GM12878 (cell line): ENCODE measurements at regions of chr11 and their contacts with region 1.

Region 1: GRCh38 chr11:108586600-108586999 is 7.0 kb downstream of the EXPH5 start:
- DNase-seq: no peak
- ATAC-seq: no peak
- H3K4me3 ChIP-seq: no peak overlapping the region
- H3K27ac ChIP-seq: no peak overlapping the region
- H3K4me1 ChIP-seq: peaks cover 11% of the 10 kb centered on the region
- H3K27me3 ChIP-seq: no peaks in the 10 kb centered on the region
- CTCF ChIP-seq: no peak
- EP300 ChIP-seq: no peak
- POLR2A ChIP-seq: no peak
- RAD21 ChIP-seq: no peak

Region 2: DNA sequence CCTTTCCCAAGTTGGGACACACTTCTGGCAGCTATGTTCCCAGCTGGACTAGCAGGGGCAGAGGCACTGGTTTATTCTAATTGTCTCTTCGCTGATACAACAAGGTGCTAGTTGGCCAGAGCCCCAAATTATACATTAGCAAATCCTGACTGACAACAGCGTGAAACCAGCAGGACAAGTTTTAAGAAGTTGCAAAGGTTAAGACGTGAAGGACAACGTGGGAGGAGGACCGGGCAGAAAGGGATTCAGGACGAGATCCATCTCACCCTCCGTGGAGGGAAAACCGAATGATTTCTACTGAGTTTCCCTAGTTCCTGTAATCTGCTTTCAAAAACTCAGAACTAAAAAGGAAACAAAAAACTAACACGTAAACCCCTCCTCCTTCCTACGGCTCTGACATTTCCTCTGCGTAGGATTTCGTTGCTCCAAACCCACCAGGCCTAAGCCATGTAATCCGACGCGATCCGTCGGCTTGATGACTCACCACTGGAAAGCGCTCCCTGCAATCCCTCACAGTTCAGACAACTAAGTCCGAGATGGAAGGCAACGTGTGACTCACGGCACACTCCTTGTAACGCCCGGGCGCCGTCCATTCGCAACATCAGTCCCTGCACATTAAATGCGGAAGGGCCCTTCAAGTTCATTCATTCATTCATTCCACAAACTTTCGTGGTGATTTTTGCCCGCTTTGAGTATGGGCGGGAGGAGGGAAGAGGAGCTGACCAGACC is 89.1 kb before region 1 on chr11:
- CTCF ChIA-PET with region 1: no interaction called
- POLR2A ChIA-PET with region 1: no interaction called
- RAD21 ChIA-PET with region 1: interaction called, 4 read pairs
- SMC1A ChIA-PET with region 1: interaction called, 10 read pairs
- in situ Hi-C with region 1: no loop called
- intact Hi-C with region 1: no loop called
- DNase-seq: peak; percentile 60
- ATAC-seq: peak; percentile 68
- H3K4me3 ChIP-seq: peak overlapping the region; percentile 65
- H3K27ac ChIP-seq: peak overlapping the region; percentile 66
- H3K4me1 ChIP-seq: no peaks in the 10 kb centered on the region
- H3K27me3 ChIP-seq: no peaks in the 10 kb centered on the region
- CTCF ChIP-seq: no peak
- EP300 ChIP-seq: 0 out of 4 replicates have a peak, but pooled peaks of 1 of the 2 experiments have one; percentile 3
- POLR2A ChIP-seq: peak; percentile 83
- RAD21 ChIP-seq: no peak

Region 3: DNA sequence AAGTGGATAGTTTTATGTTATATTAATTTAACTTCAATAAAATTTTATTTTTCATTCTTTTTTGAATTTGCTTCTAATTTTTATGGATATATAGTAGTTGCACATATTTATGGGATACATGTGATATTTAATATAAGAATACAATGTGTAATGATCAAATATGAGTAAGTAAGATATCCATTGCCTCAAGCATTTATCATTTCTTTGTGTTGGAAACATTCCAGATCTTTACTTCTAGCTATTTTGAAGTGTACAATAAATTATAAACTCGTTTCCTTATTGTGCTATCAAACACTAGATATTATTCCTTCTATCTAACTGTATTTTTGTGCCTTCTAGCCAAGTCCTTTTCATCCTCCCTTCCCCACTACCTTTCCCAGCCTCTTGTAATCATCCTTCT is 10.1 kb before region 1 on chr11:
- CTCF ChIA-PET with region 1: interaction called, 4 read pairs
- POLR2A ChIA-PET with region 1: interaction called, 3 read pairs
- RAD21 ChIA-PET with region 1: interaction called, 4 read pairs
- SMC1A ChIA-PET with region 1: interaction called, 13 read pairs
- in situ Hi-C with region 1: no loop called
- intact Hi-C with region 1: no loop called
- DNase-seq: no peak
- ATAC-seq: no peak
- H3K4me3 ChIP-seq: no peak overlapping the region
- H3K27ac ChIP-seq: no peak overlapping the region
- H3K4me1 ChIP-seq: no peaks in the 10 kb centered on the region
- H3K27me3 ChIP-seq: no peaks in the 10 kb centered on the region
- CTCF ChIP-seq: no peak
- EP300 ChIP-seq: no peak
- POLR2A ChIP-seq: no peak
- RAD21 ChIP-seq: no peak

Region 4: GRCh38 chr11:108620958-108621772 is 34.6 kb after region 1 on chr11:
- CTCF ChIA-PET with region 1: interaction called, 16 read pairs
- POLR2A ChIA-PET with region 1: interaction called, 7 read pairs
- RAD21 ChIA-PET with region 1: interaction called, 13 read pairs
- SMC1A ChIA-PET with region 1: interaction called, 12 read pairs
- in situ Hi-C with region 1: no loop called
- intact Hi-C with region 1: no loop called
- DNase-seq: peak; percentile 86
- ATAC-seq: peak; percentile 95
- H3K4me3 ChIP-seq: peak overlapping the region; percentile 39; the same call in 1 of the 2 replicates
- H3K27ac ChIP-seq: peak overlapping the region; percentile 93
- H3K4me1 ChIP-seq: peaks cover 18% of the 10 kb centered on the region
- H3K27me3 ChIP-seq: no peaks in the 10 kb centered on the region
- CTCF ChIP-seq: no peak
- EP300 ChIP-seq: peak; percentile 89 to 94
- POLR2A ChIP-seq: 0 out of 2 replicates have a peak, but pooled peaks have one; percentile 28
- RAD21 ChIP-seq: peak; percentile 16; the same call in 1 of the 2 replicates